CD8-positive, alpha-beta T cell (primary cell): ENCODE measurements at regions of chr16 and their contacts with region 1.

Region 1: GRCh38 chr16:73202161-73202729 is 154.3 kb upstream of the ZFHX3 start:
- DNase-seq: no peak
- ATAC-seq: no peak
- H3K4me3 ChIP-seq: no peak overlapping the region
- H3K4me3 Mint-ChIP-seq: no peak overlapping the region
- H3K27ac ChIP-seq: no peak overlapping the region
- H3K27ac Mint-ChIP-seq: no peak overlapping the region
- H3K4me1 ChIP-seq: no peaks in the 10 kb centered on the region
- H3K4me1 Mint-ChIP-seq: no peaks in the 10 kb centered on the region
- H3K27me3 ChIP-seq: no peaks in the 10 kb centered on the region
- H3K27me3 Mint-ChIP-seq: no peaks in the 10 kb centered on the region
- CTCF ChIP-seq: no peak

Region 2: DNA sequence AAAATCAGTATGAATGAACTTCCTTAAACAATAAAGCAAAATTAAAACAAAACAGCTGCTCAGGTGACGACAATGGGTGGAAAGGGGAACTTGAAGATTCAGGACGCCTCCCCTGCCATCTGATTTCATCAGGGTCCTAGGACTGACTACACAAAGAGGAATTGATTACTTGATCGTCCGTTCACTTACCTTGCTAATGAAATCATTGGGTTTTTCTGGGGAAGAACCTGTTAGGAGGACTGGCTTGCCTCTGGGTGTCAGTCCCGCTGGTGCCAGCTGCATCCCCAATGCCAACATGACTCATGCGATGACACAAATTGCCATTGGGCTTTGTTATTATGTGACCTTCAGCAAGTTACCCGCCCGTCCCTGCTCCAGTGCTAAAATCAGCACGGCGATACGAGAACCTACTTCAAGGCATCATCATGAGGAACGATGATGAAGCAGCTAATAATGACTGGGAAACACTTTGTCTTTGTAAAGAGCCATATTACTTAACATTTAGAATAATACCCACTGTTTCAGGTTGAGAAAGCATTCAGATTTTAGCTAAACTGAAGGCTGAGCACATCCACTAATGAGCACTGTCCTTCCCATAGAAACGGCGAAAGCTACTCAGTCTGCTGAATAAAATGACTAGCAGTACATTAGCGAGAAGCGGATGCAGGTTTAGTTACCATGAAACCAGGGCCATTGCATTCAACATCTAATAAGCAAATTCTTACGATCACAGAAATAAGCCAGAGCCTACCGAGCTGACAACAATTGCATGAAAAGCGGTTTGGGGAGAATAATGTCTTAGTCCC is 293.7 kb before region 1 on chr16:
- CTCF ChIA-PET with region 1: no interaction called
- POLR2A ChIA-PET with region 1: no interaction called
- intact Hi-C with region 1: no loop called
- DNase-seq: peak in 1 of 9 experiments; percentile 11
- ATAC-seq: no peak
- H3K4me3 ChIP-seq: no peak overlapping the region
- H3K4me3 Mint-ChIP-seq: no peak overlapping the region
- H3K27ac ChIP-seq: no peak overlapping the region
- H3K27ac Mint-ChIP-seq: no peak overlapping the region
- H3K4me1 ChIP-seq: no peaks in the 10 kb centered on the region
- H3K4me1 Mint-ChIP-seq: no peaks in the 10 kb centered on the region
- H3K27me3 ChIP-seq: no peaks in the 10 kb centered on the region
- H3K27me3 Mint-ChIP-seq: no peaks in the 10 kb centered on the region
- CTCF ChIP-seq: no peak

Region 3: DNA sequence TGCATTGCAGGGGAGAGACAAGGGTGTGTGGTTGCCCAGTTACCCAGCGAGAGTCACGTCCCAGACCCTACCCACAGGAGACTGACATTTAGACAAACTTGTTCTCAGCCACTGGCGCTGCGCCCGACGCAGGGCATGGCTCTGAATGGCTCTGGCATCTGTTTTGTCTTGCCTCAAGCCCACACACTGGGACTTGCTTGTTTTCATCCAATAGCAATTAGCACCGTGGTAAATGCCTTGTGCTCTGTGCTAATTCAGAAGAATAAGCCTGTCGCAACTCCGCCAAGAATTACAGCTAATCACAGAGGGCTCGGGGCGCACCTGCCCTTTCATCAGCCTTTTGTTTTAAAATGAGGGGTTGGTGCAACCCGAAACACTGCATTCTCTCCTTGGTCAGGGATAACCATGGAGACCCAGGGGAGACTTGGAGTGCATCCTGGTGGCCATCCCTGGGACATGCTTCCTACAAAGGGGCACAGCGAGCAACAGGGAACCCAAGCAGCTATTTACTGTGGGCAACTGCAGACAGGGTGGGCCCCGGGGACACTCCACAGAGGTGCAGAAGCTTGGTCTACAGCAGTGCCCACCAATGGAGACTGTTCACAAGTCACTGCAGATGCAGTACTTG is 66.2 kb after region 1 on chr16:
- CTCF ChIA-PET with region 1: no interaction called
- POLR2A ChIA-PET with region 1: no interaction called
- intact Hi-C with region 1: loop called in 1 of 2 experiments (anchors 10 kb)
- DNase-seq: no peak
- ATAC-seq: no peak
- H3K4me3 ChIP-seq: no peak overlapping the region
- H3K4me3 Mint-ChIP-seq: no peak overlapping the region
- H3K27ac ChIP-seq: no peak overlapping the region
- H3K27ac Mint-ChIP-seq: no peak overlapping the region
- H3K4me1 ChIP-seq: no peaks in the 10 kb centered on the region
- H3K4me1 Mint-ChIP-seq: no peaks in the 10 kb centered on the region
- H3K27me3 ChIP-seq: no peaks in the 10 kb centered on the region
- H3K27me3 Mint-ChIP-seq: no peaks in the 10 kb centered on the region
- CTCF ChIP-seq: no peak